GM13976 (cell line): ENCODE measurements at regions of chr1 and their contacts with region 1.

Region 1: GRCh38 chr1:3900119-3900968 is at the start of gene C1orf174:
- DNase-seq: peak; percentile 94
- CTCF ChIP-seq: no peak

Region 2: GRCh38 chr1:4801192-4801924 is 901.0 kb after region 1 on chr1:
- in situ Hi-C with region 1: loop called (anchors 25 kb)
- DNase-seq: no peak
- CTCF ChIP-seq: no peak